Dendritic cell treated with granulocyte-macrophage colony-stimulating factor and Interleukin-4, amounts not matched to agents 40 ng/mL and 50 ng/mL, for 4 days (primary cell): ENCODE measurements at regions of chr6 and their contacts with region 1.

Region 1: DNA sequence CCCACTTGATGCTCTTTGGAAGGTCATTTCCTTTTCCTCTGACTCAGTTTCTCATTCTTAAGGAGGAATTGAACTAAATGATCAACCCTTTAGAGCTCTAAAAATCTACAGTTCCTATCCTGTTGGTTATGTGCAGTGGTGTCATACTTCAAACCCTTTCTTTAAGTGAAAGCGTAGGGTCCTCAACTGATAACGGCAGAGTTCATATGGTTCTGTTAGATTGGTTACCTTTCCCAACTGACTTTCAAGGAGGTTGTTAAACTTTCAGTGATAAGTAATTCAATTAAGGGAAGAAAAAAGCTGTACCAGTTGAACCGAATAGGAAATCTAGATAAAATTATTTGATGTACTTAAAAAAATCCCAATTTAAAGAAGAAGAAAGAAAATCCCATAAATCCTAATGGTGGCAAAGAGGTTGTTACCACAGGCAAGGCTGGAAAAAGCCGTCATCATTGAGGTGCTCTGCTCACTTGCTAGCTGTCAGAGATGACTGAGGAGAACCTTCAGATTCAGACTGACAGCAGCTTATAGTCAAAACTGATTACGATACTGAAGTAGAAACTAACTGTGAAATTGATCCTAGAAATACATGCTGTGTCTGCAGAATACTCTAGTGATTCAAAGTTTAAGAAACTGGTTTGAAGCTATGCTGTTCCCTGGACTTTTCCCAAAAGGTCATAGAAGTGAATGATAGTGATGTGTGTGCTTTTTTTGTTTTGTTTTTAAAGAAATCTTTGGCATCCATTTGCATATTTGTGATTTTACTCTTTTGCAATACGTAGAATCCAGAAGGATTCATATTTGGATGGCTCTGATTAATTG is 16.2 kb downstream of the TMEM14A start:
- H3K4me3 Mint-ChIP-seq: no peak overlapping the region
- H3K27ac Mint-ChIP-seq: no peak overlapping the region
- H3K4me1 Mint-ChIP-seq: peaks cover 11% of the 10 kb centered on the region
- H3K27me3 Mint-ChIP-seq: peaks cover 66% of the 10 kb centered on the region

Region 2: GRCh38 chr6:52435345-52435744 is 251.7 kb before region 1 on chr6:
- intact Hi-C with region 1: no loop called
- H3K4me3 Mint-ChIP-seq: no peak overlapping the region
- H3K27ac Mint-ChIP-seq: no peak overlapping the region
- H3K4me1 Mint-ChIP-seq: peaks cover 6% of the 10 kb centered on the region
- H3K27me3 Mint-ChIP-seq: no peaks in the 10 kb centered on the region

Region 3: DNA sequence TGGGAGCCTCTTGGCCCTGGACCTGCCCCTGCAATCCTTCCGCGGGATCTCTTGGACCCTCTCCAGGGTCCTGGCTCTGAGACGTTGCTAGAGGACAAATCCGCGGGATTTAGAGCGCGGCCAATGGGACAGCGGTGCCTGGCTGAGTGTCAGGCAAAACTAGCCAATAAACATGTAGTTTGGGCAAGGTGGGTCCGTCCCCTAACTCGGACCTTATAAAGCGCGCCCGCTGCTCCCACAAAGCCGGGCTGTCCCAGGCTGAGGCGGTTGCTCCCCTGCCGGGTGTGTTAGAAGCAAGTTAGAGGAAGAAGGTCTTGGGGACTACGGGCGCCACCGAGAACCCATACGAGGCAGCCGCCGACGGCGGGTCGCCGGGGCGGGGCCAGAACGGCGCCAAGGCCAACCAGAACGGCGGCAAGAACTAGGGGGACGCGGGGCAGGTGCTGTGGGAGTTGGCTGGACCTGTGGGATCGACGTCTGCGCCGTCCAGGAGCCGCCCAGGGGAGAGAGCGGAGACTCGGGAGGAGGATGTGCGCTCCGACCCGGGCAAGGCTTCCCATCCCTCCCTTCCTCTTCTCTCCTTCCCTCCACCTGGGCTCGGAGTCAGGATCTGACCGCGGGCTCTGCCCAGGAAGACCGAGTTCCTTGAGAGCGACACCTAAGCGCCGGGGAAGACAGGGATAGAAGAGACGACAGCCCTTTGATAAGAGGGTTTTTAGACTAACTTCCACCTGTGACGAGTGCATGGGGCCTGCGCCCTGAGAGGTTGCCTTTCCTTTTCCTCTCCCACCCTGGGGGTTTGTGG is 22.7 kb before region 1 on chr6:
- intact Hi-C with region 1: loop called (anchors 2 kb)
- H3K4me3 Mint-ChIP-seq: no peak overlapping the region
- H3K27ac Mint-ChIP-seq: no peak overlapping the region
- H3K4me1 Mint-ChIP-seq: no peaks in the 10 kb centered on the region
- H3K27me3 Mint-ChIP-seq: peaks cover 17% of the 10 kb centered on the region

Region 4: GRCh38 chr6:52724406-52725121 is 37.5 kb after region 1 on chr6:
- intact Hi-C with region 1: no loop called
- H3K4me3 Mint-ChIP-seq: no peak overlapping the region
- H3K27ac Mint-ChIP-seq: peak overlapping the region; percentile 60
- H3K4me1 Mint-ChIP-seq: peaks cover 13% of the 10 kb centered on the region
- H3K27me3 Mint-ChIP-seq: peaks cover 9% of the 10 kb centered on the region

Region 5: GRCh38 chr6:52995913-52996645 is 309.0 kb after region 1 on chr6:
- intact Hi-C with region 1: loop called (anchors 10 kb)
- H3K4me3 Mint-ChIP-seq: peak overlapping the region; percentile 85
- H3K27ac Mint-ChIP-seq: peak overlapping the region; percentile 79
- H3K4me1 Mint-ChIP-seq: peaks cover 31% of the 10 kb centered on the region
- H3K27me3 Mint-ChIP-seq: peaks cover 25% of the 10 kb centered on the region